MCF 10A (cell line): ENCODE measurements at regions of chr11 and their contacts with region 1.

Region 1: GRCh38 chr11:75422253-75423231 is 10.5 kb downstream of the KLHL35 start:
- DNase-seq: no peak
- H3K4me3 Mint-ChIP-seq: no peak overlapping the region
- H3K27ac Mint-ChIP-seq: peak overlapping the region; percentile 42
- H3K4me1 Mint-ChIP-seq: peaks cover 6% of the 10 kb centered on the region
- H3K27me3 Mint-ChIP-seq: no peaks in the 10 kb centered on the region
- CTCF ChIP-seq: no peak

Region 2: DNA sequence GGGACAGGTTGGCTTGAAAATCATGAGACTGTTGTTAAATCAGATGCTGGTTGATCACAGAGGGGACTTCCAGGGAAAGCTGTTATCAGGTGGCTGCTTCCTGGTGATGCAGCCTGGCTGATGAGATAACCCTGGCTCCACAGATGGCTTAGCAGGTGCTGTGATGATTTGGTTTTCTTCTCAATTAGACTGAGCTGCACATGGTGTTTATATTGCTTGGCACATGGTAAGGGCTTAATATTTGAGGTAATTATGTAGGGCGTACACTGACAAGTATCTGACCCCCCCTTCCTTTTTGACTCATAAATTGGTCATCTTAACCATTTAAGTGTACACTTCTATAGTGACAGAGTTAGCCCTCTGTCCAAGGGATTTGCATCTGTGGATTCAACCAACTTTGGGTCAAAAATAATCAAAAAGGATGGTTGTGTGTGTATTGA is 16.2 kb before region 1 on chr11:
- CTCF ChIA-PET with region 1: interaction called, 11 read pairs
- POLR2A ChIA-PET with region 1: interaction called, 10 read pairs
- intact Hi-C with region 1: no loop called
- DNase-seq: no peak
- H3K4me3 Mint-ChIP-seq: no peak overlapping the region
- H3K27ac Mint-ChIP-seq: no peak overlapping the region
- H3K4me1 Mint-ChIP-seq: peaks cover 36% of the 10 kb centered on the region
- H3K27me3 Mint-ChIP-seq: no peaks in the 10 kb centered on the region
- CTCF ChIP-seq: no peak

Region 3: GRCh38 chr11:75603791-75604736 is 181.5 kb after region 1 on chr11:
- CTCF ChIA-PET with region 1: no interaction called
- POLR2A ChIA-PET with region 1: no interaction called
- intact Hi-C with region 1: no loop called
- DNase-seq: peak; percentile 96
- H3K4me3 Mint-ChIP-seq: no peak overlapping the region
- H3K27ac Mint-ChIP-seq: peak overlapping the region; percentile 72
- H3K4me1 Mint-ChIP-seq: peaks cover 30% of the 10 kb centered on the region
- H3K27me3 Mint-ChIP-seq: no peaks in the 10 kb centered on the region
- CTCF ChIP-seq: no peak